ENCODE measurements at regions of chr19 and their contacts with region 1.

Region 1: GRCh38 chr19:50476224-50476942 is at the starts of genes EMC10 and GARIN5A:
- DNase-seq: peak; percentile 74 to 92 (median 86)
- H3K4me3 ChIP-seq: peak within 1 kb of the TSS; percentile 61 to 100 (median 95)
- H3K27ac ChIP-seq: peak within 1 kb of the TSS; percentile 52 to 97 (median 88)
- H3K27me3 ChIP-seq: no peaks in the 10 kb centered on the region
- CTCF ChIP-seq: peak in 33 of 56 donors; percentile 9 to 54 (median 27)
- total RNA-seq, gene EMC10: 54.6 to 147 (median 79.1) TPM
- total RNA-seq, gene GARIN5A: 3.2 to 14.9 (median 8.0) TPM

Region 2: GRCh38 chr19:50025024-50025789 is 451.2 kb before region 1 on chr19 and contains the start of gene VRK3:
- intact Hi-C with region 1: loop called in 1 of 2 experiments (anchors 10 kb)
- DNase-seq: peak; percentile 99 to 100 (median 99)
- H3K4me3 ChIP-seq: peak within 1 kb of the TSS; percentile 61 to 100 (median 96)
- H3K27ac ChIP-seq: peak within 1 kb of the TSS; percentile 24 to 97 (median 88)
- H3K27me3 ChIP-seq: no peaks in the 10 kb centered on the region
- CTCF ChIP-seq: peak in 37 of 56 donors; percentile 4 to 47 (median 25)
- total RNA-seq, gene VRK3: 38.8 to 67.5 (median 53.3) TPM

Region 3: GRCh38 chr19:50376166-50377050 is 100.0 kb before region 1 on chr19 and contains the start of gene NR1H2:
- intact Hi-C with region 1: loop called in 1 of 2 experiments (anchors 5 kb)
- DNase-seq: peak; percentile 94 to 97 (median 96)
- H3K4me3 ChIP-seq: peak within 1 kb of the TSS; percentile 73 to 100 (median 98)
- H3K27ac ChIP-seq: peak within 1 kb of the TSS; percentile 86 to 100 (median 97)
- H3K27me3 ChIP-seq: no peaks in the 10 kb centered on the region
- CTCF ChIP-seq: peak in 36 of 56 donors; percentile 3 to 57 (median 32)
- total RNA-seq, gene NR1H2: 47.4 to 83.8 (median 64.3) TPM

Region 4: GRCh38 chr19:50511068-50511822 is 34.9 kb after region 1 on chr19 and contains the start of gene JOSD2:
- intact Hi-C with region 1: loop called (anchors 2 to 5 kb)
- DNase-seq: peak; percentile 97 to 100 (median 99)
- H3K4me3 ChIP-seq: peak within 1 kb of the TSS; percentile 66 to 98 (median 81)
- H3K27ac ChIP-seq: peak within 1 kb of the TSS; percentile 60 to 100 (median 98)
- H3K27me3 ChIP-seq: no peaks in the 10 kb centered on the region
- CTCF ChIP-seq: peak in 40 of 56 donors; percentile 10 to 60 (median 38)
- total RNA-seq, gene JOSD2: 24.9 to 75.5 (median 41.2) TPM

Region 5: GRCh38 chr19:50547385-50548190 is 71.2 kb after region 1 on chr19:
- intact Hi-C with region 1: loop called in 1 of 2 experiments (anchors 5 kb)
- DNase-seq: peak in 1 of 10 donors; percentile 58
- H3K4me3 ChIP-seq: peak overlapping the region; percentile 23 to 87 (median 71)
- H3K27ac ChIP-seq: peak overlapping the region; percentile 65 to 99 (median 94)
- H3K27me3 ChIP-seq: no peaks in the 10 kb centered on the region
- CTCF ChIP-seq: peak in 48 of 56 donors; percentile 10 to 63 (median 38)